Prostate gland (tissue), 2 donors: ENCODE measurements at regions of chr13 and their contacts with region 1.

Region 1: GRCh38 chr13:109869312-109870237 is 83.2 kb upstream of the IRS2 start:
- DNase-seq: peak; percentile 36
- H3K4me3 ChIP-seq: peak overlapping the region; percentile 8 to 28
- H3K27ac ChIP-seq: peak overlapping the region in 1 of 2 donors; percentile 60
- H3K4me1 ChIP-seq: no peaks in the 10 kb centered on the region
- H3K27me3 ChIP-seq: no peaks in the 10 kb centered on the region
- CTCF ChIP-seq: peak in 1 of 4 experiments; percentile 39
- POLR2A ChIP-seq: no peak

Region 2: DNA sequence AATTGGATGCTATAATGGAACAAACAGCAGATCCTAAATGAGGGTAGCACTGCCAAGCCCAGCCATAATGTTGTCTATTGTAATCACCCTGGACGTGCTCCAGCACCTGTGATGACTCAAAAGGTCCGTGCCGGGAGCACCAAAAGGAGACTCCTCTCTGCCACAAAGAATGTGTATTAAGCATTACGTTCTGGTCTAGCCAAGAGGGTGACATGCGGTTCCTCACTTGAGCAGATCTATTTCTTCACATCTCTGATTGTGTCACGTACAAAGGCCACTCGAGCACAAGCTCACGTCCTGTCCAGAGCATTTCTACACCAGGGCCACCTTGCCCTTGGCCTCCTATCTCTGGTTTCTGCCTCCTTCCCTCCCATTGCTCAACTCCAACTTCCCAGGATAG is 136.7 kb after region 1 on chr13:
- intact Hi-C with region 1: loop called (anchors 10 kb)
- DNase-seq: peak; percentile 50
- H3K4me3 ChIP-seq: no peak overlapping the region
- H3K27ac ChIP-seq: no peak overlapping the region
- H3K4me1 ChIP-seq: no peaks in the 10 kb centered on the region
- H3K27me3 ChIP-seq: no peaks in the 10 kb centered on the region
- CTCF ChIP-seq: no peak
- POLR2A ChIP-seq: no peak